H1 (cell line): ENCODE measurements at regions of chr11 and their contacts with region 1.

Region 1: DNA sequence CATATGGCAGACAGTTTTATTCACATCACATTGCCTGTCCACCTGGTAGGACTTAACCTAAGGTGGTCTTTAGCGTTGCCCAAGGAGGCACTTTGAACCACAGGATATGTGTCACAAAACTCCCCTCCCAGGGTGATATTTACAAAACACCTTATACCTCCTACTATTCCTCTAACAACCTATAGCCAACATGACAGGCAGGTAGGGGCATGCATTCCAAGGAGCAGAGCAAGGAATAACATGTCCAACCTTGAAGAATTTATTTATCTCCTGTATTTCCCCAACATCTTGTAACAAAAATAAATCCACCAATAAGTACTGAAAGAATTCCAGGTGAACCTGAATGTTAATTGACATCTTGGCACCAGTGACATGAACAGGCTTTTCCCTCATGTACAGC is 60.5 kb downstream of the SVIP start:
- DNase-seq: no peak
- H3K4me3 ChIP-seq: no peak overlapping the region
- H3K27ac ChIP-seq: no peak overlapping the region
- H3K4me1 ChIP-seq: no peaks in the 10 kb centered on the region
- H3K27me3 ChIP-seq: no peaks in the 10 kb centered on the region
- CTCF ChIP-seq: no peak
- EP300 ChIP-seq: no peak
- POLR2A ChIP-seq: no peak
- RAD21 ChIP-seq: no peak

Region 2: DNA sequence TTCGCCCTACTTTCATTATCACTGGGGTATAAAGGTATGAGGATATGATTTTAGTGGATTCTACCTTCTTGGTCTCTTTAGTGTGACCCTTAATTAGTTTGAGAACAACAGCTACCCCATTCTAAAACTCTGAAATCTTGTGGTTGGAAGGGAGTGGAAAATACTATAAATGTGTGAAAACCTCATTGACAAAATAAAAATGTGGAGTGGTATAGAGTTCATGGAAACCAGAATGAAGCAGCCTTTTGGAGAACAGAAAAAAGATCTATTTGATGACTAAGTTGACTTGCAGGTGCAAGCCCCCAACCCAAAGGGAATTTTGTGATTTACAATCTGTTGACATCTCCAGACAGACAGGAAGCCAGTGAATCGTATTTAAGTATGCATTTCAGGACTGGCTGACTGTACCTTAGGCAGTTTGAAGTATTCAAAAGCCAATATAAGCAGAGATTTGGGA is 26.9 kb before region 1 on chr11:
- CTCF ChIA-PET with region 1: no interaction called
- POLR2A ChIA-PET with region 1: no interaction called
- DNase-seq: no peak
- H3K4me3 ChIP-seq: no peak overlapping the region
- H3K27ac ChIP-seq: no peak overlapping the region
- H3K4me1 ChIP-seq: no peaks in the 10 kb centered on the region
- H3K27me3 ChIP-seq: no peaks in the 10 kb centered on the region
- CTCF ChIP-seq: no peak
- EP300 ChIP-seq: no peak
- POLR2A ChIP-seq: no peak
- RAD21 ChIP-seq: no peak

Region 3: DNA sequence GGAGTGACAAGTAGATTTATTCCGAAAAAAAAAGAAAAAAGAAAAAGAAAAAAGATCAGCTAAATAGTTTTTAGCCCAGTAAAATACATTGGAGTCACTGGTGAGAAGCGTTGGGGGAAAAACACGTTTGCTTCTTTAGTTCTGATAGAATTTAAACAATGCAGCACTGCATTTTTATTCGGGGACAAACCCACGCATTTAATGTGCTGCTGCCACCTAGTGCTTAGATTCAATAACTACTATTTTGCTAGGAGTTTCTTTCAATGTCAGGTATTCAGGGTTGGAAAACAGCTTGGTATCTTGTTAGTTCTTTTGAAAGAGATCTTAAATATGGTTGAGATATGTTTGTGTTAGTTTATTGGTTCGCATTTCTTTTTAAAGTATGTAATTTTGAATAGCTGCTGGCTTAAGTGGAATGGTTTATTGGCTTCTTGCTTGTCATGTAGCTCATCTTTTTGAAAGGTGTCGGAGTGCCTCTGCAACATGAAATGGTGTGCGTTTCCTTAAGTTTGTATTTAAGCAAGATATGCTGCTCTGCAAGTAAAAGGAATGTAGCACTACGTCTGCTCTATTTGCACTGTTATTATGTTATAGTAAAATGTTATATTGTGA is 18.6 kb after region 1 on chr11:
- CTCF ChIA-PET with region 1: interaction called, 13 read pairs
- POLR2A ChIA-PET with region 1: no interaction called
- DNase-seq: no peak
- H3K4me3 ChIP-seq: no peak overlapping the region
- H3K27ac ChIP-seq: no peak overlapping the region
- H3K4me1 ChIP-seq: no peaks in the 10 kb centered on the region
- H3K27me3 ChIP-seq: no peaks in the 10 kb centered on the region
- CTCF ChIP-seq: peak in 2 of 3 experiments; percentile 54 to 61; a peak in 3 of 4 replicates
- EP300 ChIP-seq: no peak
- POLR2A ChIP-seq: no peak
- RAD21 ChIP-seq: peak; percentile 81 to 85

Region 4: GRCh38 chr11:22807855-22808570 is 38.9 kb after region 1 on chr11:
- CTCF ChIA-PET with region 1: no interaction called
- POLR2A ChIA-PET with region 1: no interaction called
- DNase-seq: no peak
- H3K4me3 ChIP-seq: no peak overlapping the region
- H3K27ac ChIP-seq: no peak overlapping the region
- H3K4me1 ChIP-seq: no peaks in the 10 kb centered on the region
- H3K27me3 ChIP-seq: no peaks in the 10 kb centered on the region
- CTCF ChIP-seq: no peak
- EP300 ChIP-seq: no peak
- POLR2A ChIP-seq: no peak
- RAD21 ChIP-seq: no peak

Region 5: GRCh38 chr11:23311986-23312942 is 543.2 kb after region 1 on chr11:
- CTCF ChIA-PET with region 1: no interaction called
- POLR2A ChIA-PET with region 1: no interaction called
- DNase-seq: no peak
- H3K4me3 ChIP-seq: no peak overlapping the region
- H3K27ac ChIP-seq: no peak overlapping the region
- H3K4me1 ChIP-seq: no peaks in the 10 kb centered on the region
- H3K27me3 ChIP-seq: no peaks in the 10 kb centered on the region
- CTCF ChIP-seq: no peak
- EP300 ChIP-seq: no peak
- POLR2A ChIP-seq: no peak
- RAD21 ChIP-seq: no peak